Thyroid gland (tissue), 4 donors: ENCODE measurements at regions of chr18 and their contacts with region 1.

Region 1: GRCh38 chr18:8389391-8390340 is 219.6 kb upstream of the RAB12 start:
- DNase-seq: peak; percentile 82 to 89
- H3K4me3 ChIP-seq: no peak overlapping the region
- H3K27ac ChIP-seq: no peak overlapping the region
- H3K4me1 ChIP-seq: no peaks in the 10 kb centered on the region
- H3K27me3 ChIP-seq: no peaks in the 10 kb centered on the region
- CTCF ChIP-seq: peak; percentile 74 to 85 (median 84)
- POLR2A ChIP-seq: no peak

Region 2: DNA sequence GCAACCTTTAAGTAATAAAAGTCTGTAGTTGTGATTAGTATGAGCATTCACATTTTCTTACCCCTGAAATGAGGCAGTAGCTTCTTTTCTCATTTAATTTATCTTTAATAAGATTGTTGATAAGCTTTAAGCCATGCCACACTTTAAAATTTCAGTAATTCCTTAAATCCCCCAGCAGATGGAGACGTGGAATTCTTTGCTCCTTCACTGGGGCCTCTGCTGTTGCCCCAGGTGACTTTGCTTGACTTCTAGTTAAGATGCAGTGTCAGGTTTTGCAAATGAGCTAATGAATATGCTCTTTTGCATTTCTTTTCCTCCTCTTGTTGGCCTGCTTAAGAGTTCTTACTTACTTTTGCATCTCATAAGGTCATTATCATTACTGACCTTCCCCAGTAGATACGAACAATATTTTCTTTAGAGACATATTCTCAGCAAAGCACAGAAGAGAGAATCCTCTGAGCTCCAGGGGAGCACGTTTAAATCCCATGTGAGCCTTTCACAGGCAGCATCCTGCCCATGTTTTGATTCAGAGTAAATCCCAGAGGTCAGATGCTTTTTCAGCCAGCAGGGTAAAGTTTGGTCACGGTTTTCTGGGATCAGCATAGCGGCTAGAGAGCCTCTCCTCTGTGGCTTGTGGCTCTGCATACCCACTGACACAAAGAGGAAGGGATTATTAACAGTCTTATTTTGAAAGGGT is 599.7 kb before region 1 on chr18:
- intact Hi-C with region 1: loop called (anchors 10 kb)
- DNase-seq: peak; percentile 53 to 57
- H3K4me3 ChIP-seq: no peak overlapping the region
- H3K27ac ChIP-seq: peak overlapping the region; percentile 49 to 66 (median 63)
- H3K4me1 ChIP-seq: peaks cover 13 to 20% of the 10 kb centered on the region in 2 donors
- H3K27me3 ChIP-seq: no peaks in the 10 kb centered on the region
- CTCF ChIP-seq: peak in 4 of 6 experiments; percentile 46 to 67 (median 52)
- POLR2A ChIP-seq: no peak

Region 3: GRCh38 chr18:8443505-8443904 is 53.8 kb after region 1 on chr18:
- intact Hi-C with region 1: no loop called
- DNase-seq: no peak
- H3K4me3 ChIP-seq: no peak overlapping the region
- H3K27ac ChIP-seq: no peak overlapping the region
- H3K4me1 ChIP-seq: no peaks in the 10 kb centered on the region
- H3K27me3 ChIP-seq: no peaks in the 10 kb centered on the region
- CTCF ChIP-seq: no peak
- POLR2A ChIP-seq: no peak

Region 4: GRCh38 chr18:8595445-8595844 is 205.8 kb after region 1 on chr18:
- intact Hi-C with region 1: no loop called
- DNase-seq: no peak
- H3K4me3 ChIP-seq: no peak overlapping the region
- H3K27ac ChIP-seq: no peak overlapping the region
- H3K4me1 ChIP-seq: no peaks in the 10 kb centered on the region
- H3K27me3 ChIP-seq: no peaks in the 10 kb centered on the region
- CTCF ChIP-seq: no peak
- POLR2A ChIP-seq: no peak

Region 5: GRCh38 chr18:8930990-8931648 is 541.5 kb after region 1 on chr18:
- intact Hi-C with region 1: no loop called
- DNase-seq: no peak
- H3K4me3 ChIP-seq: no peak overlapping the region
- H3K27ac ChIP-seq: no peak overlapping the region
- H3K4me1 ChIP-seq: no peaks in the 10 kb centered on the region
- H3K27me3 ChIP-seq: no peaks in the 10 kb centered on the region
- CTCF ChIP-seq: no peak
- POLR2A ChIP-seq: no peak